ENCODE measurements at regions of chr14 and their contacts with region 1.

Region 1: GRCh38 chr14:23631702-23632460 is 4.3 kb upstream of the DHRS2 start:
- DNase-seq: peak; percentile 81
- H3K4me3 ChIP-seq: no peak overlapping the region
- H3K27ac ChIP-seq: no peak overlapping the region
- H3K4me1 ChIP-seq: no peaks in the 10 kb centered on the region
- H3K27me3 ChIP-seq: peaks cover 0 to 3% of the 10 kb centered on the region in 2 experiments
- CTCF ChIP-seq: peak; percentile 94 to 97
- POLR2A ChIP-seq: no peak

Region 2: DNA sequence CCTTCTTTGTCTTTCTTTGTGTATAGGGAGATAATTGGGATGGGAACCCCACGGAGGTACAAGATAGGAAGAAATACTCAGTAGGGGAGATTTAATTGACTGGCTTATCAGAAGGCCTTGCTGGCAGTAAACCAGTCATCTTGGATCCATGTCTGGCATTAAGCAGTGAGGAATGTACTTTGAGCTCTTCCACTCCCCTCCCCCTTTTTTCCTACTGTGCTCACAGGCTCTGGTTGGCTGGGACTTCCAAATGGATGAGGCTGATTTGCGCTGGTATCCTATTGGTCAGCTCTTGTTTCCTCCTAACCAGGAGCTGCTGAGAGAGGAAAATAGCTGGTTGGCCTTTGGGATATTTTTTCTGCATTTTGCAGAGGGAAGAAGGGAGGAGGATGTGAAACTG is 137.7 kb before region 1 on chr14:
- CTCF ChIA-PET with region 1: no interaction called
- POLR2A ChIA-PET with region 1: no interaction called
- dilution Hi-C with region 1: no loop called
- intact Hi-C with region 1: no loop called
- DNase-seq: no peak
- H3K4me3 ChIP-seq: no peak overlapping the region
- H3K27ac ChIP-seq: no peak overlapping the region
- H3K4me1 ChIP-seq: no peaks in the 10 kb centered on the region
- H3K27me3 ChIP-seq: no peaks in the 10 kb centered on the region
- CTCF ChIP-seq: no peak
- POLR2A ChIP-seq: no peak

Region 3: DNA sequence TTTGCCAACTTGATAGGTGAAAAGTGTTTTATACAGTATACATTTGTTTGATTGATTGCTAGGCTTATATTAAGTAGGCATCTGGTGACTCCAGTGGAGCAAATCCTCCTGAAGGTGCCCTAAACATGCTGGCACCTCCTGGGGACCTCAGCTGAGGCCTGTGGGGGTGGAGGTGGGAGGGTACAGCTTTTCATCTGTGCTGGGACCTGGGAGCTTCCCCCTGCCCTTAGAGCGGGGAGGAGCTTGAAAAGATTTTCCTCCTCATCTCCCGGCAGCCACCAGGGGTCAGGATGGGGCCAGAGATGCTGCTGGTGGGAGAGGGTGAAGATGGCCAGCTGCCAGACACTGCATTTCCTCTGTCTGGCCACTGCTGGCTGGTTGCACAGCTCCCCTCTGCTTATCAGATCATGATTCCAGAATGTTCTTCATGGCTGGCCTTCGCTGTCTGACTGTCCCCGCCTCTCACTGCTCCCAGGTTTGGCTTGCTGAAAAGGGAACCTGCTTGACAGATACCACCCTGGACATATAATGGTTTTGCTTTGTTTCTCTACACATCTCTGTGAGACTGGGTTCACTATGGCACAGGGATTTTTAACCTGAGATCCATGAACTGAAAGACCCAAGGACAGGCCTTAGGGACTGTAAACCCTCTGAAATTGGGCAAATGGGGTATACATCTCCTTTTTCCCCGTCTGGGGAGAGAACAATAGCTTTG is 42.8 kb before region 1 on chr14:
- CTCF ChIA-PET with region 1: interaction called, 31 read pairs
- POLR2A ChIA-PET with region 1: no interaction called
- dilution Hi-C with region 1: no loop called
- intact Hi-C with region 1: loop called (anchors 2 kb)
- DNase-seq: peak; percentile 87
- H3K4me3 ChIP-seq: no peak overlapping the region
- H3K27ac ChIP-seq: no peak overlapping the region
- H3K4me1 ChIP-seq: peaks cover 5% of the 10 kb centered on the region
- H3K27me3 ChIP-seq: no peaks in the 10 kb centered on the region
- CTCF ChIP-seq: peak; percentile 76 to 90
- POLR2A ChIP-seq: no peak

Region 4: DNA sequence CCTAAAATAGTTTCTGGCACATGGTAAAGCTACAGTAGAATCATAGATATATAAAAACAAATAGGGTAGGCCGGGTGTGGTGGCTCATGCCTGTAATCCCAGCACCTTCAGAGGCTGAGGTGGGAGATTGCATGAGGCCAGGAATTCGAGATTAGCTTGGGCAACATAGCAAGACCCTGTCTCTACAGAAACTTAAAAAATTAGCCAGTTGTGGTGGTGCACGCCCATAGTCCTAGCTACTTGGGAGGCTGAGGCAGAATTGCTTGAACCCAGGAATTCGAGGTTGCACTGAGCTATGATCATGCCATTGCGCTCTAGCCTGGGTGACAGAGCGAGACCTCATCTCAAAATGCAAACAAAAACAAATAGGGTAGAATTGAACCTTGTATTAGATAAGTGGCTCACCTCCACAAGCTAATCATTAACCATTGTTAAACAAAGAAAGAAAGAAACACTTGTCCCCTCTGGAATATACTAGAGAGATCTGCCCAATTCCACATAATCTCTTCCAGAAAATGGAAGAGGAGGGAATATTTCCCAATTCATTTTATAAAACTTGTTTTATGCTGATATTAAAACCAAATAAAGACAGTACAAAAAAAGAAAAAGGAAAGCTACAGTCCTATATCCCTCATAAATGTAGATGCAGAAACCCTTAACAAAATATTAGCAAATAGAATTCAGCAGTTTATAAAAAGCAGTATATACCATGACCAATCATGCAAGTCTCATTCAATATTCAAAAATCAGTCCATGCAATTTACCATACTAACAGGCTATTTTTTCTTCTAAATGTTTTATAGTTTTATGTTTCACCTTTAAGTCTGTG is 18.4 kb before region 1 on chr14:
- CTCF ChIA-PET with region 1: interaction called, 20 read pairs
- POLR2A ChIA-PET with region 1: no interaction called
- dilution Hi-C with region 1: no loop called
- intact Hi-C with region 1: no loop called
- DNase-seq: no peak
- H3K4me3 ChIP-seq: no peak overlapping the region
- H3K27ac ChIP-seq: no peak overlapping the region
- H3K4me1 ChIP-seq: no peaks in the 10 kb centered on the region
- H3K27me3 ChIP-seq: peaks cover 0 to 2% of the 10 kb centered on the region in 2 experiments
- CTCF ChIP-seq: no peak
- POLR2A ChIP-seq: no peak

Region 5: GRCh38 chr14:23665375-23666192 is 33.7 kb after region 1 on chr14:
- CTCF ChIA-PET with region 1: interaction called, 20 read pairs
- POLR2A ChIA-PET with region 1: no interaction called
- dilution Hi-C with region 1: no loop called
- intact Hi-C with region 1: no loop called
- DNase-seq: peak; percentile 55
- H3K4me3 ChIP-seq: no peak overlapping the region
- H3K27ac ChIP-seq: no peak overlapping the region
- H3K4me1 ChIP-seq: no peaks in the 10 kb centered on the region
- H3K27me3 ChIP-seq: peaks cover 0 to 2% of the 10 kb centered on the region in 2 experiments
- CTCF ChIP-seq: peak; percentile 48 to 62
- POLR2A ChIP-seq: no peak

Region 6: GRCh38 chr14:23910101-23910875 is 278.4 kb after region 1 on chr14:
- CTCF ChIA-PET with region 1: interaction called, 183 read pairs
- POLR2A ChIA-PET with region 1: no interaction called
- dilution Hi-C with region 1: no loop called
- intact Hi-C with region 1: loop called (anchors 1 kb)
- DNase-seq: peak; percentile 58
- H3K4me3 ChIP-seq: no peak overlapping the region
- H3K27ac ChIP-seq: no peak overlapping the region
- H3K4me1 ChIP-seq: no peaks in the 10 kb centered on the region
- H3K27me3 ChIP-seq: peaks cover 0 to 3% of the 10 kb centered on the region in 2 experiments
- CTCF ChIP-seq: peak; percentile 66 to 84
- POLR2A ChIP-seq: no peak

Region 7: DNA sequence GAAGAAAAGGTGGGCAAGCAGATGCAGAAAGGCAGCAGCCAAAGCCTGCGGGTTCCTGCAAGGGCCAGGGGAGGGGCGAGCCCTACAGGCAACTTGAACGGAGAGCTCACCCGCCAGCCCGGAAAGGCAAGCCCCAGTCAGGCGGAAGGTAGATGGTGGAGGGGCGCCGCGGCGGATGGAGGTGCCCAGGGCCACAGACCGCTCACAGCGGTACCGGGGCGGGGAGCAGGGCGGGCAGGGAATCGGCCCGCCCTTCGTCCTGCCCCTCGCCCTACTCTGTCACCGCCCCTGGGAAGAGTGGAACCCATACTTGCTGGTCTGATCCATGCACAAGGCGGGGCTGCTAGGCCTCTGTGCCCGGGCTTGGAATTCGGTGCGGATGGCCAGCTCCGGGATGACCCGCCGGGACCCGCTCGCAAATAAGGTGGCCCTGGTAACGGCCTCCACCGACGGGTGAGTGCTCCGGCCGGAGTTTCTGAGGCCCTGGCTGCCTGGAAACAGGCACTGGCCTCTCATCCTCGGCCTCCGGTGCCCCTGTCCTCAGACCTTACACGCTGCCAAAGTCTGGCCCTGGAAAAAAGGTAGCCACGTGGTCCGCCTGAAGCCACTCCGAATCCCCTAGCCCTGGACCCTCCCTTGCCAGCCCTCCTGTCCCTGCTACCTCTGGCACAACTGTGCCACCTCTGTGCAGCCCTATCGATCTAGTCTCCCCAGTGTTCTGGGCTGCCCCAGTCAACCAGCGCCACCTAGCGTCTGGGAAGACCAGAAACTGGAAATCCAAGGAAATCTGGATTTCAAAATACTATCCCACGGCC is 321.8 kb after region 1 on chr14 and contains the start of gene DHRS4:
- CTCF ChIA-PET with region 1: interaction called, 4 read pairs
- POLR2A ChIA-PET with region 1: no interaction called
- dilution Hi-C with region 1: no loop called
- intact Hi-C with region 1: loop called (anchors 1 kb)
- DNase-seq: peak; percentile 82
- H3K4me3 ChIP-seq: peak within 1 kb of the TSS; percentile 67 to 80 (median 72)
- H3K27ac ChIP-seq: peak within 1 kb of the TSS; percentile 44
- H3K4me1 ChIP-seq: no peaks in the 10 kb centered on the region
- H3K27me3 ChIP-seq: no peaks in the 10 kb centered on the region
- CTCF ChIP-seq: peak; percentile 85 to 88
- POLR2A ChIP-seq: peak; percentile 85
- total RNA-seq, gene DHRS4: 19.2 and 24.4 TPM in 2 replicates